Activated T-helper 1 cell treated with anti-CD3 and anti-CD28 coated beads, Interleukin-12 subunit alpha, Interleukin-12 subunit beta, Interleukin-2, Interleukin-4 antibody, amounts not matched to agents 30 ng/mL and 10 ng/mL and 1 ng/mL, durations not matched to agents 14 hours and 24 hours and 36 hours (primary cell): ENCODE measurements at regions of chr14 and their contacts with region 1.

Region 1: GRCh38 chr14:24431569-24432258 is 2.0 kb downstream of the KHNYN start:
- DNase-seq: peak; percentile 85
- H3K4me3 Mint-ChIP-seq: peak overlapping the region; percentile 90
- H3K27ac Mint-ChIP-seq: peak overlapping the region; percentile 95
- H3K4me1 Mint-ChIP-seq: peaks cover 51% of the 10 kb centered on the region
- H3K27me3 Mint-ChIP-seq: no peaks in the 10 kb centered on the region

Region 2: DNA sequence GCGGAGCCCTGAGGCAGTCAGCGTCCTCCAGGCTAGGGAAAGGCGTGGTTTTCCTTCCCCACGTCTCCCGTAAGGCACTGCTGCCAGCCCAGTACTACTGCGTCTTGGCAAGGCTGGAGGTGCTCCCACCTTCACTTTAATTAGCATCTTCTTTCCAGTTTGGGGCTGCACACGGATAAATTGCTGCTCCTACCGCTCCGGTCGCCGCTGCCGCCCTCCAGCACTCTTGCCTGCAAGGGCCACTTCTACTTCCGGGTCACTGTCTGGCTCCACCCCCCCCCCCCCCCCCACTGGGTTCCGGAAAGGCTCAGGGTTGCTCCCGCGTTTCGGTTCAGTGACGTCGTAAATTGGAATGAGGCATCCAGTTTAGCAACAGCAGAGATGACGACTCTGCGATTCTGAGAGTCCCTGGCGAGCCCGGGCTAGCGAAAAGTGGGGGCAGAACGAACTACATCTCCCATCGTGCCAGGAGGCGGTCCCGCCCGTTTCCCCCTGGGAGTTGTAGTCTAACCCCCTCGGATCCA is 199.5 kb before region 1 on chr14 and contains the start of gene NEDD8:
- intact Hi-C with region 1: loop called (anchors 1 kb)
- DNase-seq: peak; percentile 84
- H3K4me3 Mint-ChIP-seq: peak within 1 kb of the TSS; percentile 93
- H3K27ac Mint-ChIP-seq: peak within 1 kb of the TSS; percentile 91
- H3K4me1 Mint-ChIP-seq: peaks cover 50% of the 10 kb centered on the region
- H3K27me3 Mint-ChIP-seq: no peaks in the 10 kb centered on the region
- total RNA-seq, gene NEDD8: 177 and 185 TPM in 2 replicates

Region 3: GRCh38 chr14:24310646-24311604 is 120.8 kb before region 1 on chr14 and contains the start of gene LTB4R:
- intact Hi-C with region 1: loop called (anchors 1 kb)
- DNase-seq: peak; percentile 59
- H3K4me3 Mint-ChIP-seq: peak within 1 kb of the TSS; percentile 85
- H3K27ac Mint-ChIP-seq: peak within 1 kb of the TSS; percentile 84
- H3K4me1 Mint-ChIP-seq: peaks cover 81% of the 10 kb centered on the region
- H3K27me3 Mint-ChIP-seq: peaks cover 1% of the 10 kb centered on the region
- total RNA-seq, gene LTB4R: 10.1 and 11.1 TPM in 2 replicates

Region 4: DNA sequence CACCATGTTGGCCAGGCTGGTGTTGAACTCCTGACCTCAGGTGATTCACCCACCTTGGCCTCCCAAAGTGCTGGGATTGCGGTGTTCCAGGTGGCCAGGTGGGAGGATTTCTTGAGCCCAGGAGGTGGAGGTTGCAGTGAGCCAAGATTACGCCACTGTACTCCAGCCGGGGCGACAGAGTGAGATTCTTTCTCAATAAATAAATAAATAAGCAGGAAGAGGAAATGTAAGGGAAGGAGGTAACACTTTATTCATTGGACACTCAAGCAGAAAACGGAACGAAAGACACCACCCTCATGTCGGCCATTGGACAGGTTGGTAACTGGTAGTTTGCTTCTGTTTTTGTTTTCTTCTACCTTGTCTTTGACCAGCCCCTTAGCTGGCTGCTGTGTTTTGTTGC is 76.7 kb before region 1 on chr14:
- intact Hi-C with region 1: no loop called
- DNase-seq: no peak
- H3K4me3 Mint-ChIP-seq: no peak overlapping the region
- H3K27ac Mint-ChIP-seq: no peak overlapping the region
- H3K4me1 Mint-ChIP-seq: no peaks in the 10 kb centered on the region
- H3K27me3 Mint-ChIP-seq: peaks cover 31% of the 10 kb centered on the region

Region 5: DNA sequence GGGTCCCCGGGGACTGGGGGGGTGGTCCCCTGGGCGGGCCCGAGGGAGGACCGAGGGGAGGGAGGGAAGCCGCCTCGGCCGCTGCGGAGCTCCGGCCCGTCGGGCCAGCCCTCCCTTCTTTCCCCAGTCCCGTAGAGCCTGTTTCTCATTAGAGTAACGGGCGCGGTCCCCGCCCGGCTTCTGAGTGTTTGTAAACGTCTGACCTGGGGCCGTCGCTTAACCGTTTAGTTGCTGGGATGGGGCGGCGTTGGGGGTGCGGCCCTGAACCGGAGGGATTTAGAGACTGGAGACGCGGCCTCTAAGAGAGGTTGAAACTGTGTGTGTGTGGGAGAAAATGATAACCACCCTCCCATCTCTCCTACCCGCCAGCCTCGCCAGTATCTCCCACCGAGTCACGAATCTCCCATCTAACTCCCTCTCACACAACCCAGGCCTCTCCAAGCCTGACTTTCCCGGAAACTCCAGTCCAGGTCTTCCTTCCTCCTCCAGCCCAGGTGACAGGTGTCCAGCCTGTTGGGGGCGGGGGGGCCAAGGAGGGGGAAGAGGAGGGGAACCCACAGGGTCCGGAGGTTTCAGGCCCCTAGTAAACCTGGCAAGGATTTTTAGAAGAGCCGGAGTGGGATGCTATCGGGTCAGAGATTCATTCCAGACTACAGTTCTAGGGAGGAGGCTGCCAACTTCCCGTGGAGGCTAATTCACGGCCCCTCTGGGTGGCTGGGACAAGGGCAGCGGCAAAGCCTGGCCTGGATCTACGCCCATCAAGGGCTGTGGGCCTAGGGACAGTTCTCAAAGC is 64.8 kb before region 1 on chr14:
- intact Hi-C with region 1: loop called (anchors 1 kb)
- DNase-seq: no peak
- H3K4me3 Mint-ChIP-seq: peak overlapping the region; percentile 37
- H3K27ac Mint-ChIP-seq: no peak overlapping the region
- H3K4me1 Mint-ChIP-seq: peaks cover 23% of the 10 kb centered on the region
- H3K27me3 Mint-ChIP-seq: peaks cover 55% of the 10 kb centered on the region

Region 6: DNA sequence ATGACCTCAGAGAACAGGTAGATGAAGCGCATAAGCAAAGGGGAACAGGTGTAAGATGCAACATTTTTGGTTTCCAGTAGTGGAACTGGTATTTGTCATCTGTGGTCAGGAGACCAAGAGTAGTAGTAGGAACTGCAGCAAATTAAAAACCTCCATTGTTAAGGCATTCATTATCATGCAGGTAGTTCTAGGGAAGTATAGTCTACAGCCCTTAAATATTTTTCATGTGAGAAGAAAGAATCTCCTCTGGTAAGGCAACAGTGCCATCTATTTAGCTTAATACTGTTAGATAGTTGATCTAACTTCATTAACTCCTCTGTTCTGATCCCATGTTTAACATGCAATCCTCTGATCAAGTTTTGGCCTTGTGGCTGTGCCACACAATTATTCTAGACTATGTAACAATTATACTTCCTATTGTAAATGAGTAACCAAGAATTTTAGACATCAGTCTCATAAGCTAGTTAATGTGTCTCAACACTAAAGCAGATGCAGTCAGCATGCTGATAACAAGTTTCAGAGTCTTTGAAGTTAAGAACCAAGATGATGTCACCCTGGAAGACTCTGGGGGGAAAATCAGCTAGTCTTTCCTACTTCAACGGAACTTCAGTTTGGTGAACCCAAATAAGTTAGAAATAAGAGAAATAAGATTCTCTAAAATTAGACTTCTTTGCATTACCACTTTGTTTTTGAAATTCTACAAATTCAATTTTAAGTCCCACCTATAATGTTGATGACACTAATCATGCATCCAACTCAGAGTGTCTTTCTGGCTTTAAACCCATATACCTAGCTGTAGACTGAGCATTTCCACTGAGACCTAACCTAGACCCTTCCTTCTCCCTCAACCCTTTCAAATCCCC is 547.4 kb after region 1 on chr14:
- intact Hi-C with region 1: no loop called
- DNase-seq: no peak
- H3K4me3 Mint-ChIP-seq: no peak overlapping the region
- H3K27ac Mint-ChIP-seq: no peak overlapping the region
- H3K4me1 Mint-ChIP-seq: no peaks in the 10 kb centered on the region
- H3K27me3 Mint-ChIP-seq: peaks cover 3% of the 10 kb centered on the region